ENCODE measurements at regions of chr9 and their contacts with region 1.

Region 1: DNA sequence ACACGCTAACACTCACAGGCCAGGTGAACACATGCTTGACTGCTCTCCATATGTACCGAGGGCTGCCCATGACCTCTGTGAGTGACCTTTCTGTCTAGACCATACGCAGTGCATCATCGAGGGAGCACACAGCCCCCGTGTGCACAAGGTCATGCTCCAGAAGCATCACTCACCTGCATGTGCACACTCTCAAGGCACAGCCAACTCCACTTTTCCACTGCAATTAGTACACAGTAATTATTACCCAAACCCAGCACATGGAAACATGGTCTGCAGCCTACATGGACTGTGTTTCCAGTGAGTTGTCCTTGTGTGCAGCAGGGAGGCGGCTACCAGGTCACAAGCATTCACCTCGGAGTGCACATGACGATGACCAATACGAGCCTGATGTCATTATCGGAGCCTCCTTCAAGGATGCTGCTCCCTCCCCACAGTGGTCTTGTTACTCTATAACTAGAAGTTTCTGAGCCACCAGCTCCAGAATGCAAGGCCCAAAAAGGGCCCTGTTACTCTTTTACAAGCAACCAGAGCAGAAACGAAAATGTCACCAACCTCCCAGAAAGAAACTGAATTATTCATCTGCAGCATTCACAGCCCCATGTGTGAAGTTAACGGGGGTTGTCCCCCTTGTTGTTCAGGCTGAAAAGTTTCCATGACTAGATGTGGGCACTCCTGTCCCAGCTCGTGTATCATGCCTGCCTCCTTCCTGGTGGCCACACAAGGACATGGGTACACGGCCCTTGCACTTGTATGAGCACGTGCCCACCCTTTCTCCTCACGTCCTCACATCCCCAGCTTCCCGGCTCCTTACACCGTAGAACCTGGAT is 31.2 kb downstream of the SEMA4D start:
- DNase-seq: peak; percentile 80
- ATAC-seq: peak; percentile 73
- H3K4me3 Mint-ChIP-seq: peak overlapping the region; percentile 62
- H3K27ac Mint-ChIP-seq: peak overlapping the region; percentile 95
- H3K4me1 Mint-ChIP-seq: peaks cover 96% of the 10 kb centered on the region
- H3K27me3 Mint-ChIP-seq: no peaks in the 10 kb centered on the region

Region 2: DNA sequence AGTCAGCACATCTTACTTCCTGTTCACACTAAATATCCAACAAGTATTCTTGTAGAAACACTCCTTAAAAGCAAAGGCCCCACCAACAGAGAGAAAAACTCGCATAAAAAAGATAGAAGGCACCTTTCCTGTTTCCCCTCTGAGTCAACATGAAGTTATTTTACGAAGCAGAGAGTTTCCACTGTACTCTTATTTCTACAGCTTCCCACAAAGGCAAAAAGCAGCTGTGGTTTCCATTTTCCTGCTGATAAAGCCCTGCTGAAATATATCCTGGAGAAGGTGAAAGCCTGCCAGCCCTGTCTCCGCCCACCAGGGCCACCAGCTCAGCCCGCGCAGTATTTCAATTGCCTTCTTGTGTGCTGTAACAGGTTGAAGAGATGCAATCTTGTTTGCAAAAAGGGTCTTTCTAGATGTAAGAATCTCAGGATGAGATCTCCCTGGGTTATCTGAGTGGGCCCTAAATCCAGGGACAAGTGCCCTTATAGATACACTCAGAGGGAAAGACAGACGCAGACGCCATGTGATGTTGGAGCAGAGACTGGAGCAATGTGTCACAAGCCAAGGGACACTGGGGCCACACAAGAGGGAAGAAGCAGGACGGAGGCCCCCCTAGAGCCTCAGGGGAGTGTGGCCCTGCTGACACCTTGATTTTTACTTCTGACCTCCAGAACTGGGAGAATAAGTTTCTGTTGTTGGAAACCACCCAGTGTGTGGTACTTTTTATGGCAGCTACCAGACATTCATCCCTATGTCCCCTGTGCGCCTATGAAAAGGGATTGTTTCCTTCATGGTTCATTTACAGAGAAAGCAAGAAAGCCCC is 11.4 kb after region 1 on chr9:
- CTCF ChIA-PET with region 1: interaction called, 5 read pairs
- POLR2A ChIA-PET with region 1: interaction called, 21 read pairs
- intact Hi-C with region 1: loop called (anchors 1 kb)
- DNase-seq: peak; percentile 79
- ATAC-seq: peak; percentile 43
- H3K4me3 Mint-ChIP-seq: peak overlapping the region; percentile 92
- H3K27ac Mint-ChIP-seq: peak overlapping the region; percentile 99
- H3K4me1 Mint-ChIP-seq: peaks cover 94% of the 10 kb centered on the region
- H3K27me3 Mint-ChIP-seq: no peaks in the 10 kb centered on the region

Region 3: DNA sequence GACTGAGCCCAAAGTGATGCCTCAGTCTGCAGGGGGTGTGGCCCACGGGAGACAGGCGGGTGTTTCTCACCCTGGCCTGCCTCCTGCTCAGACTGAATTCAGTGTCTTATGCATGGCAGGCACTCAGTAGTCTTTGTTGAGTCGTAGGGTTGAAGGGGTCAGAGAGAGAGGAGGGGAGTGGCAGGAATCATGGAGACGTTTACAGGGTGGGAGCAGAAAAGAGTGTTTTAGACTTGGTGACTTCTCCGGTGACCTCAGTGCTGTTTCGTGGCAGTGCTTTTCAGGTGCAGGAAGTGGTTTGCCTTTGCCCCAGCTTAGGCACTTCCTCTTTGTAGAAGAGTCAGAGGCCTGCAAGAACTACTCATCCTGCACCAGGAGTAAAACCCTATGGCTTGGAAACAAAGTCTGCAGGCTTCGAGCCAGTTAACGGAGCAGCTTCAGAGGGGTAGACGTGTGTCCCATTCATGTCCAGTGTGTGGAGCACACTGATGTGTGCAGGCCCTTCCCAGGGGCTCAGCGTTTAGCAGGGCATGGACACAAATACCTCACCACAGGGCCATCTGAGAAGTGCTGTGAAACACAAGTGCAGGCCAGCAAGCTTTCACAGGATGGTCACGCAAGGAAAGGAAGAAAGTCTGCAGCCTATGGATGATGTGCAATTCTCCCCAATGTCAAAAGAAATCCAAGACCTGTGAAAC is 55.7 kb after region 1 on chr9:
- CTCF ChIA-PET with region 1: no interaction called
- POLR2A ChIA-PET with region 1: no interaction called
- intact Hi-C with region 1: loop called in 1 of 2 experiments (anchors 1 kb)
- DNase-seq: peak; percentile 86
- ATAC-seq: peak; percentile 90
- H3K4me3 Mint-ChIP-seq: peak overlapping the region; percentile 62
- H3K27ac Mint-ChIP-seq: peak overlapping the region; percentile 97
- H3K4me1 Mint-ChIP-seq: peaks cover 94% of the 10 kb centered on the region
- H3K27me3 Mint-ChIP-seq: no peaks in the 10 kb centered on the region

Region 4: DNA sequence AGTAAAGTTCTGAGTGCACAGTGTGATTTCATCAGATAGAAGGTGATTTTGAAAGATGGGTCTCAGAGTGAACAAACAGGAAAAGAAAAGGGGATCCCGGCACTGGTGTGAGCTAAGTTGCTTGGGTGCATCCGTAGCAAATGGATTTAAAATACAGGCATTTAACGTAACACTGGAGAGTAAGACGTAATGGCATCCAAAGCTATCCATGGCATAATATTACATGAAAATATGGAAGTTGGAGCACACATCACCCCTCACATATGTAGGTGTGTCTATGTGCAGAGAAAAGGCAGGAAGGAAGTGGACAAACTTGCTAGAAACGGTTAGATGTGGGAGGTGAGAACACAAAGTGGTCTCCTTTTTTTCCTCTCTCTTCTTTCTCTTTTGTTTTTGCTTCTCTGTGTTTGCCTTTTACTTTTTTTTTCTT is 69.5 kb after region 1 on chr9:
- CTCF ChIA-PET with region 1: interaction called, 3 read pairs
- POLR2A ChIA-PET with region 1: no interaction called
- intact Hi-C with region 1: loop called (anchors 1 to 5 kb)
- DNase-seq: no peak
- ATAC-seq: peak; percentile 68
- H3K4me3 Mint-ChIP-seq: peak overlapping the region; percentile 57
- H3K27ac Mint-ChIP-seq: peak overlapping the region; percentile 97
- H3K4me1 Mint-ChIP-seq: peaks cover 88% of the 10 kb centered on the region
- H3K27me3 Mint-ChIP-seq: no peaks in the 10 kb centered on the region

Region 5: DNA sequence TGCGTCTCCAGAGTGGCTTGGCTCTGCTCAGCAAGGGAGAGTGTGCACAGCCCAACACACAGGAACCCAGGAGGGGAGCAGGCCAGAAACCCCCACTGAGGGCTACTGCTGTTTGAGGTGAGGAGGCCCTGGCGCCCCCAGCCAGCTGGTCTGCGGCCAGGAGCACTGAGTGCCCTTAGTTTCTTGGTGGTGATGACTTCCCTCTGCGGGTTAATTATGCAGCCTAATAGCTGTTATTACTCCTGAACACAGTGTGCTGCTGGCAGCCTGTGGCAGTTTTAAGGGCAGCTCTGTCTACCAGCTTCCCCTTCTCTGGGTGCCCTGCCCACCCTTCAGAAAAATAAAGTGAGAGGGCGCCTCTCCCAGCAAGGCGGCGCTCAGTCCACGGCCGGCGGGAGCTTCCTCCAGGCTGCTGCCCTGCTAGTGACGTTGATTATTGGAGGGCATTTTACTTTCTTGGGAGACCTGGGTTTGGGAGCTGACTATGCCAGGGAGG is 157.3 kb after region 1 on chr9:
- CTCF ChIA-PET with region 1: no interaction called
- POLR2A ChIA-PET with region 1: no interaction called
- intact Hi-C with region 1: no loop called
- DNase-seq: no peak
- ATAC-seq: no peak
- H3K4me3 Mint-ChIP-seq: no peak overlapping the region
- H3K27ac Mint-ChIP-seq: no peak overlapping the region
- H3K4me1 Mint-ChIP-seq: no peaks in the 10 kb centered on the region
- H3K27me3 Mint-ChIP-seq: no peaks in the 10 kb centered on the region

Measured in activated CD4-positive, alpha-beta T cell treated with anti-CD3 and anti-CD28 coated beads for 36 hours (primary cell).